ENCODE measurements at regions of chr6 and their contacts with region 1.

Region 1: GRCh38 chr6:26596579-26597388 is at the start of gene ABT1:
- DNase-seq: peak; percentile 98
- H3K4me3 Mint-ChIP-seq: no peak within 1 kb of the TSS
- H3K27ac Mint-ChIP-seq: no peak within 1 kb of the TSS
- H3K4me1 Mint-ChIP-seq: peaks cover 9% of the 10 kb centered on the region
- H3K27me3 Mint-ChIP-seq: peaks cover 7% of the 10 kb centered on the region
- CTCF ChIP-seq: no peak
- total RNA-seq, gene ABT1: 18.8 and 20.9 TPM in 2 replicates

Region 2: GRCh38 chr6:26312501-26313390 is 284.0 kb before region 1 on chr6:
- CTCF ChIA-PET with region 1: no interaction called
- intact Hi-C with region 1: loop called (anchors 1 kb)
- DNase-seq: peak; percentile 91
- H3K4me3 Mint-ChIP-seq: peak overlapping the region; percentile 75
- H3K27ac Mint-ChIP-seq: peak overlapping the region; percentile 98
- H3K4me1 Mint-ChIP-seq: peaks cover 43% of the 10 kb centered on the region
- H3K27me3 Mint-ChIP-seq: no peaks in the 10 kb centered on the region
- CTCF ChIP-seq: no peak

Region 3: DNA sequence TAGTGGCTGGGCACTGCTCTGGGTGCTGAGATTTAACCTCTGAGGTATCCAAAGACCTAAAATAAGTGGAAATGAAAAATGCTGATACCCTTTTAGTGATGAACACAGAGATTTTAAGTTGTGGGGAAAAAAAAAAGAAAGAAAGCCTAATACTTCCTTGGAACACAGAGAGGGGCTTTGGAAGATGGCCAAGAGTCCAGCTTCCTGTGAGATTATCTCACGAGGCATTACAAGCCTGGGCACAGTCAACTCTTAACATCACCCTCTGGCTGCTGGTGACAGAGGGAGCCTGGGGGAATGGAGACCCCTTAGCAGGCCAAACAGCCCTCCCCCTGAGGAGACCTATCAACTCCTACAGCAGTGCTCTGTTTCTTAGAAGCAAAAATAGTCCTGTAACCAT is 119.4 kb before region 1 on chr6:
- CTCF ChIA-PET with region 1: interaction called, 14 read pairs
- intact Hi-C with region 1: no loop called
- DNase-seq: no peak
- H3K4me3 Mint-ChIP-seq: no peak overlapping the region
- H3K27ac Mint-ChIP-seq: no peak overlapping the region
- H3K4me1 Mint-ChIP-seq: peaks cover 25% of the 10 kb centered on the region
- H3K27me3 Mint-ChIP-seq: no peaks in the 10 kb centered on the region
- CTCF ChIP-seq: no peak

Region 4: GRCh38 chr6:26568601-26569432 is 28.0 kb before region 1 on chr6:
- CTCF ChIA-PET with region 1: interaction called, 33 read pairs
- intact Hi-C with region 1: loop called (anchors 1 kb)
- DNase-seq: peak; percentile 96
- H3K4me3 Mint-ChIP-seq: peak overlapping the region; percentile 88
- H3K27ac Mint-ChIP-seq: peak overlapping the region; percentile 100
- H3K4me1 Mint-ChIP-seq: peaks cover 28% of the 10 kb centered on the region
- H3K27me3 Mint-ChIP-seq: peaks cover 13% of the 10 kb centered on the region
- CTCF ChIP-seq: no peak